PC-9 (cell line): ENCODE measurements at regions of chr1 and their contacts with region 1.

Region 1: DNA sequence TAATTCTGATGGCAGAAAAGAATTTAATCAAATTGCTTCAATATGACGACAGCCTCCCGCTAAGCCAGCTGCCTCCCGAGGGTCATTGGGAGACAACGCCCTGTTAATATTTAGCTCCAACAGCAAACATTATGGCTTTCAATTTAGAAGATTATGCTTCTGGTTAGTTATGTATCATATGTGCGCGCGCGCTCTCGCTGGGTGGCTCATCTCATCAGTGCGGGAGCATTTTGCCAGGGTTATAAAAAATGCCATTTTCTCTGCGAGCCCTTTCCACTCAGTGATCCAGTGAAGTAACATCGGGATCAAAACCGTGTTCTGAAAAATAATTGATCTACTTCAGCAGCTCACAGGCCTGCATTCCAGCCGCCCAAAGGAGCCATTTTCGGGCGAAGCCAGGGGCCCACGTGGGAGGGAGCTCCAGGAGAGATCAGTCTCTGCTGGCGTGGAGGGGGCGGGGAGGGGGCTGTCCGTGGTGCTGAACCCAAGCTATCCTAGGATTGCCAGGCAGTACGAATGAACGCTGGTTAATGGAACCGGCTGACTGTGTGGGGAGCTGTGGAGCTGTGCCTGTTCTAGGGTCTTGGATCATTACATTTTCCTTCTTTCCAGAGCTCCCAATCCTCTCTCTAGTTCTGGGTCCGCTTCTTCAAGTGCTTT is 219.1 kb upstream of the ZC3H12A start:
- DNase-seq: peak in 1 of 2 experiments; percentile 9
- H3K4me3 ChIP-seq: no peak overlapping the region
- H3K27ac ChIP-seq: no peak overlapping the region
- H3K4me1 ChIP-seq: no peaks in the 10 kb centered on the region
- H3K27me3 ChIP-seq: peaks cover 67% of the 10 kb centered on the region
- CTCF ChIP-seq: no peak

Region 2: GRCh38 chr1:36947384-36947783 is 307.9 kb before region 1 on chr1:
- CTCF ChIA-PET with region 1: no interaction called
- POLR2A ChIA-PET with region 1: no interaction called
- intact Hi-C with region 1: no loop called
- DNase-seq: no peak
- H3K4me3 ChIP-seq: no peak overlapping the region
- H3K27ac ChIP-seq: no peak overlapping the region
- H3K4me1 ChIP-seq: no peaks in the 10 kb centered on the region
- H3K27me3 ChIP-seq: peaks cover 35% of the 10 kb centered on the region; the same call in 1 of the 2 replicates
- CTCF ChIP-seq: no peak

Region 3: GRCh38 chr1:37317870-37318467 is 62.7 kb after region 1 on chr1:
- CTCF ChIA-PET with region 1: no interaction called
- POLR2A ChIA-PET with region 1: no interaction called
- intact Hi-C with region 1: no loop called
- DNase-seq: no peak
- H3K4me3 ChIP-seq: no peak overlapping the region
- H3K27ac ChIP-seq: no peak overlapping the region
- H3K4me1 ChIP-seq: no peaks in the 10 kb centered on the region
- H3K27me3 ChIP-seq: peaks cover 76% of the 10 kb centered on the region
- CTCF ChIP-seq: no peak

Region 4: DNA sequence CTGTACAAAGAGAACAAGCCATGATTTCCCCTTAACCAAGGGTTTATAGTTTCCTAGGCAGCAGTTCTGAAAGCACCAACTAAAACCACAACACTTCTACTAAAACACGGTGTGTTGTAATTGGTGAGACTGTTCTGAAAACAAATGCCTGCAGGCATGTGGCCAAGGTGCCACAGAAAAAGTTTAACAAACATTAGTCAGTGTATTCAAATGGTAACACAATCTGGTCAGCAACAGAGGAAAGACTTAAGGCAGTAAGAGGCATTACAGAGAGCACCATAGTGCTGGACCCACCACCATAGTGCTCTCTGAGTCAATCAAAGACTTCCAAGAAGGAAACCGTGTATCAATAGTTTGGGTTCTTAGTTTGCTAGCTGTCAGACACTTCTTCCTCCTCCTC is 282.1 kb after region 1 on chr1:
- CTCF ChIA-PET with region 1: interaction called, 10 read pairs
- POLR2A ChIA-PET with region 1: no interaction called
- intact Hi-C with region 1: no loop called
- DNase-seq: peak; percentile 51 to 87
- H3K4me3 ChIP-seq: no peak overlapping the region
- H3K27ac ChIP-seq: peak overlapping the region; percentile 40
- H3K4me1 ChIP-seq: peaks cover 48% of the 10 kb centered on the region
- H3K27me3 ChIP-seq: no peaks in the 10 kb centered on the region
- CTCF ChIP-seq: no peak